PC-9 (cell line): ENCODE measurements at regions of chr20 and their contacts with region 1.

Region 1: DNA sequence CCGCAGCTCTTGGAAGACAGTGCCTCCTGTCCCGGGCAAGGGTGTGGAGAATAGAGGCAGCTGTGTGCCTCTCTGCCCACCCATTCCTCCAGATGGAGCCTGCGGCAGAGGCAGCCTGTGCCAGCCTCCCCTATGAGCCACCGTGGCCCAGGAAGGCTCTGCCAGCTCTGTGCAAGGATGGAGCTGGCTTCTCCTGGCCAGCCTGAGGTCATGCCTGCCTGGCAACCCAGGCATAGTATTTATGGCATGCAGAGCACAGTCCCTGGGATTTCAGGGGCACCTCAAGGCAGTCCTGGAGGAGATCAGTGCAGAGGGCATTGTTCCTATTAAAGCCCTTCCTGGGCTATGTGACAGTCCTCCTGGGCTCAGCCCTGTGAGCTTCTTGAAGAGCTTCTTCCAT is 1.5 kb downstream of the EPB41L1 start:
- DNase-seq: no peak
- H3K4me3 ChIP-seq: no peak overlapping the region
- H3K27ac ChIP-seq: no peak overlapping the region
- H3K4me1 ChIP-seq: peaks cover 35% of the 10 kb centered on the region
- H3K27me3 ChIP-seq: no peaks in the 10 kb centered on the region
- CTCF ChIP-seq: no peak

Region 2: GRCh38 chr20:35561268-35561667 is 594.7 kb before region 1 on chr20:
- CTCF ChIA-PET with region 1: no interaction called
- POLR2A ChIA-PET with region 1: no interaction called
- intact Hi-C with region 1: no loop called
- DNase-seq: peak; percentile 61 to 77
- H3K4me3 ChIP-seq: no peak overlapping the region
- H3K27ac ChIP-seq: peak overlapping the region; percentile 70
- H3K4me1 ChIP-seq: peaks cover 32% of the 10 kb centered on the region
- H3K27me3 ChIP-seq: no peaks in the 10 kb centered on the region
- CTCF ChIP-seq: peak; percentile 61; the same call in 1 of the 2 replicates

Region 3: DNA sequence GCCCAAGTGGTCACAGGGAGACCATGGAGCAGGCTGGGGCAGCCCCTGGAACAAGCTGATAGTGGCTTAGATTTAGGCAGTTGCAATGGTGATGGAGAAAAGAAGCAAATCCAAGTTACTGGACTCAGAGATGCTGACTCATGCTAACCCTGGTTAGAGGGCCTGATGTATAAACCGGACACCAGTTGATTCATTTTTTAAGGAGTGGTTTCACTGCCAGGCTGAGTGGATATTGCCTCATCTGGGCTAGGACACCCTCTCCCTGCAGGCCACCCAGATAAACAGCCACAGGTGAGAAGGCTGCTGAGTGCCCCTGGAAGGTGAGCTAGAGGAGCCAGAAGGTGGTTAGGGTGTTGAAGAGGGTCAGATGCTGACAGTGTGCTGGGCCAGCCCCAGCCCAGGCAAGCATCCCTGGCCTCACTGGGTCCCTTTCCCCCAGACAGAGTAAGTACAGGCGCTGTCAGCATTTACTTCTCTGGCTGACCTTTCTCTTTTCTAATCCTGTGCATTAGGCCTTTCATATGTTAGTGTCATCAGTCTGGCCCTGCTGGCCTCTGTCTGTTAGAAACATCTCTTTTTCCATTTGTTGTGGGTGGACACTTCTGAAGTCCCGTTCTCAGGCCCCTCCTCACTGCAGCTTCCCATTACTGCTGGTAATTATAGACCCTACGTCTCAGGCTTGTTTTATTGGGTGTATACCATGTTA is 12.0 kb after region 1 on chr20:
- CTCF ChIA-PET with region 1: interaction called, 12 read pairs
- POLR2A ChIA-PET with region 1: no interaction called
- intact Hi-C with region 1: no loop called
- DNase-seq: peak; percentile 41 to 79
- H3K4me3 ChIP-seq: no peak overlapping the region
- H3K27ac ChIP-seq: peak overlapping the region; percentile 70
- H3K4me1 ChIP-seq: peaks cover 42% of the 10 kb centered on the region
- H3K27me3 ChIP-seq: no peaks in the 10 kb centered on the region
- CTCF ChIP-seq: no peak